Dorsolateral prefrontal cortex (tissue), 120 donors: ENCODE measurements at regions of chr11 and their contacts with region 1.

Region 1: GRCh38 chr11:125164422-125165110 is at the start of gene PKNOX2:
- DNase-seq: peak; percentile 52 to 90 (median 80)
- H3K4me3 ChIP-seq: peak within 1 kb of the TSS; percentile 54 to 87 (median 76)
- H3K27ac ChIP-seq: peak within 1 kb of the TSS; percentile 13 to 98 (median 93)
- H3K27me3 ChIP-seq: peaks cover 0 to 5% (median 0%) of the 10 kb centered on the region in 45 donors
- CTCF ChIP-seq: peak; percentile 19 to 80 (median 66)
- total RNA-seq, gene PKNOX2: 19.6 to 99.6 (median 55.2) TPM

Region 2: DNA sequence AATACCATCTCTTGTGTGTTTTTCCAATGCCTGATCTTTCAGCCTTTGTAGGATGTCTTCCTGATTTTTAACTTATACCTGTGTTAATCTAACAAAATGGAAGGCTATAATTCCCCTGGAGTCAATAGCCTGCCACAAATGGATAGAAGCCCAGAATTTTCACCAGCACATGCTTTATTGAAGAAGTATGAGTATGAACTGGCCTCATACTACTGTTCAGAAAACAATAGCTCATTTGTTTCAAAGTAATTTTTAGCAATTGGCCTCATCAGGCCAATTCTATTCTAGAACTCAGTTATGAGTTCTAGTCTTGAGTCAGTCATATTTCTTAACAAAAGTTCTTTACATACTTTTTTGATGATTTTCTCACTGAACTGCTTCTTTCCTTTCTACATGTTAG is 142.0 kb before region 1 on chr11:
- intact Hi-C with region 1: no loop called
- DNase-seq: no peak
- H3K4me3 ChIP-seq: no peak overlapping the region
- H3K27ac ChIP-seq: no peak overlapping the region
- H3K27me3 ChIP-seq: no peaks in the 10 kb centered on the region
- CTCF ChIP-seq: no peak

Region 3: DNA sequence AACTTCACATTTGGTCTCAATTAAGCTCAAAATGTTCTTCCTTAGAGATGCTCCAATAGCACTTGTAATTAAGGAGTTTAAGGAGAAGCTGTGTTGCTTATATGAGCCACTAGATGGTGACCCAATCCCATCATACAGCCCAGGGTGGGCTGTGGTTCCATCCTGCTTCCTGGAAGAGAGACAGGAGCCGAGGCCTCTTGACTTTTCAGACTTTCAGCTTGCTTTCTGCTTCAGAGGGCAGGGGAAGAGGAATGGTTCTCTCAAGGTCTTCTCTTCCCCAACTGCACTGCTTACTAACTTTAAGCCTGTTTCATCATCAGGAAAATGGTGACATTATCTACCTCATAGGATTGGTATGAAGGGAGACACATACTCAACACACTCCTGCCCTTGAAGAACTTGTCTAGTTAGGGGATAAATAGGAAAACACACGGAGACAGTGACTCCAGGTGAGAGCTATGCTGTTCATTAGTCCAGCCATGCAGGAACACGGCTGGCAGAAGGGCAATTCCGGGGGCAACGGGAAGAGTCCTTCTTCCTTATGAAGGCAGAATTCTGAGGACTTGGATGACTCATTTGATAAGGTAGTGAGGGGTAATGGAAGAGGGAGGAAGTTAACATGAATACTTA is 73.2 kb before region 1 on chr11:
- intact Hi-C with region 1: no loop called
- DNase-seq: peak in 3 of 10 donors; percentile 37 to 65 (median 50)
- H3K4me3 ChIP-seq: no peak overlapping the region
- H3K27ac ChIP-seq: peak overlapping the region in 6 of 59 donors; percentile 1 to 52 (median 17)
- H3K27me3 ChIP-seq: no peaks in the 10 kb centered on the region
- CTCF ChIP-seq: peak; percentile 48 to 86 (median 70)

Region 4: DNA sequence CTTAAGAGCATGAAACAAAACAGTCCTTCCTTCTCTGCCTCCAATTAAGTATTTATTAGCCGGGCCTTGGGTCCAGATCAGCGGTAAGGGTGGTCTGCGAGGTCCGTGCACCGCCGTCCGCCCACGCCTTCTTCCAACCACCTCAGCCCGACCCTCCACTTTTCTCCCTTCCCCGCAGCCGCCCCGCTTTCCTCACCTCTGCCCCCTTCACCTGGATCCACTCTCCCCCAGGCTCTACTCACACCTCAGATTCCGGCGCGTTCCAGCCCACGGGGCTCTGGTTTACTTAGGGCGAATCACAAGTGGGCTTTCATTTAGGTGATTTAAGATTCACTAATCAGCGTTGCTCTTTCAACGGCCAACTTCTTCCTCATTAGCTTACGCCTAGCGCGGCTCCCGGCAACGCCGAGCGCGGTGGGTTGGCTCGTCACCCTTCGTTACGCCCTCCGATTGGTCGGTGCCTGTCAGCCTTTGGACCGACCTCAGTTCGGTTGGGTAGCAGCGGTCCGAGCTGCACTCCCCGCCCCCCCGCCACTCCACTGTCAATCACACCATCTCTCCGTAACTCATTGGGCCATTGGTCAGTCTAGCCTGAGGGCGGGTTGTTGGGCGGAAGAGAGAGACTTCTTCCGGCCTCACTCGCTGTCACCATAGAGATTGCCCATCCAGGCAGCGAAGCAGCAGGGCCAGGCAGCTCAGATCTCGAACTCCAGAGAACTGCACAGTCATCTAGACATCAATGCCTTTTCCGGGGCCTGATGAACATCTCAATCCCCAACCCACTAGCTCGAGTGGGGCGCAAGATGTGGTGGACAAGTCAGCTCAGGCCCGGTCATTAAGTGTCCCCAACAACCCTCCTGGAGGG is 53.0 kb before region 1 on chr11 and contains the start of gene TMEM218:
- intact Hi-C with region 1: loop called in 1 of 2 experiments (anchors 5 kb)
- DNase-seq: peak; percentile 99 to 100 (median 100)
- H3K4me3 ChIP-seq: peak within 1 kb of the TSS; percentile 50 to 97 (median 86)
- H3K27ac ChIP-seq: peak within 1 kb of the TSS in 57 of 59 donors; percentile 43 to 92 (median 78)
- H3K27me3 ChIP-seq: no peaks in the 10 kb centered on the region
- CTCF ChIP-seq: peak in 14 of 56 donors; percentile 7 to 42 (median 24)
- total RNA-seq, gene TMEM218: 5.4 to 17.7 (median 9.7) TPM

Region 5: GRCh38 chr11:125329786-125330185 is 165.2 kb after region 1 on chr11:
- intact Hi-C with region 1: loop called in 1 of 2 experiments (anchors 5 kb)
- DNase-seq: peak in 1 of 10 donors; percentile 31
- H3K4me3 ChIP-seq: no peak overlapping the region
- H3K27ac ChIP-seq: peak overlapping the region in 56 of 59 donors; percentile 4 to 87 (median 70)
- H3K27me3 ChIP-seq: no peaks in the 10 kb centered on the region
- CTCF ChIP-seq: no peak

Region 6: DNA sequence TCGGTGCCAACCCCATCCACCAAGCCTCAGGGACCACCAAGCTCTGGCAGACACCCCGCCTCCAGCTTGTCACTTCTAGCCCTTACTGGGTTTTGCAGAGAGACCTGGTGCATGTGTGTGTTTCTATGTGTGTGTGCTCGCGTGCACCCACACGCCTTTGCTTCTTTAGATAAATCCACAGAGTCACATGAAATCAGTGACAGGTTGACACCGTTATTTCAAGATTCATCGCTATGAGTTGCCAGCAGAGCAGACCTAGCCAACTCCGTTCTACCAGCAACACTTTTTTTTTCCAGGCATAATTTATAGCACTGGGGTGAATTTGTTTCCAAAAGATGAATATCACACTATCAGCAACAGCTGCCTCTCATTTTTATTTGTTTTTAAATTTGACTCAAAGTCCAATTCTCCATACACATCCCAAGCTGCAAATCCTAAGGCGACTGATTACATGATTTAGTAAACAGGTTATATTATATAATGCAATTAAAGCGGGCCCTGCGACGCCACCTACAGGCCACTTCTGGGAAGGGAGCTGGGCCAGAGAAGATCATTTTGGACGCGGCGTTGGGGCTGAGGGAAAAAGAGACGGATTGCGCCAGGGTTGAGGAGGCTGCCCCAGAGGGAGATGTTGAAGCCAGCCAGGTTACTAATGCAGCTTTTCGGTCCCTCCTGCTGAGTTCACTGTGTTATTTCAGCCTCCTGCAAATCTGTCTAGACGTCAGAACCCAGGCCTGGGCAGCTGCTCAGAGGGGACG is 181.0 kb after region 1 on chr11:
- intact Hi-C with region 1: loop called (anchors 1 to 2 kb)
- DNase-seq: peak in 9 of 10 donors; percentile 65 to 88 (median 78)
- H3K4me3 ChIP-seq: peak overlapping the region in 1 of 59 donors; percentile 4
- H3K27ac ChIP-seq: peak overlapping the region in 57 of 59 donors; percentile 43 to 95 (median 84)
- H3K27me3 ChIP-seq: no peaks in the 10 kb centered on the region
- CTCF ChIP-seq: peak; percentile 82 to 97 (median 89)

Region 7: DNA sequence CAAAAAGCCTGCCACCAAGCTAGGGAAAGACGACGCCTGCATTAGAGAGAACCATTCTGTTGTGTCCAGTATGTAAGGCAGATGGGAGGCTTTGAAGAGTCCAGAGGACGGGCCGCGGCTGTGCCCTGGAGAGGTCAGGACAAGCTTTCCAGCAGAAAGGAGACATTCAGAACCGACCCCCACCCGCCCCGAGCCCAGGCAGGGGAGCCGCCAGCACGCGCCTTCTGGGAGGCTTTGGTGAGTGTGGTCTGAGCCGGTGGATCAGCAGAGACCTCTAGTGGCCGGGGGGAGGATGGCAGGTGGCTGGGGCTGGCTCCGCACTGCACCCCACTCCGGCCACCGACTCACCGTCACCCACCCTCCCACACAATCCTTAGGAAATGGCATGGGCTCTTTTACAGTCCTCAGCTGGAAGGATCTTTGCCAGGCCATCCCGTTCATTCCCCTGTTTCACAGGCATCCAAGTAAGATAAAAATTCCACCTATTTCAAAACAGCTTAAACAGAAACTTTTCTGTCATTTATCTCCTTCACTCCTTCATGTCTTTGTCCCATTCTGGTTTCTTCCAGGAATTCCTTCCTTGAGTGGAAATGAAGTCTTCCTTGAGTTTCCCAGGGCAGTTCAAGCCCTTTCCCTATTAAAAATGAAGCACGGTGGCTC is 240.3 kb after region 1 on chr11:
- intact Hi-C with region 1: loop called (anchors 2 to 5 kb)
- DNase-seq: peak; percentile 72 to 84 (median 77)
- H3K4me3 ChIP-seq: peak overlapping the region in 21 of 59 donors; percentile 5 to 35 (median 17)
- H3K27ac ChIP-seq: peak overlapping the region in 56 of 59 donors; percentile 12 to 87 (median 70)
- H3K27me3 ChIP-seq: no peaks in the 10 kb centered on the region
- CTCF ChIP-seq: peak; percentile 64 to 98 (median 91)

Region 8: GRCh38 chr11:125433454-125434121 is 269.0 kb after region 1 on chr11:
- intact Hi-C with region 1: loop called in 1 of 2 experiments (anchors 10 kb)
- DNase-seq: peak; percentile 58 to 86 (median 79)
- H3K4me3 ChIP-seq: peak overlapping the region in 8 of 59 donors; percentile 11 to 46 (median 20)
- H3K27ac ChIP-seq: peak overlapping the region in 57 of 59 donors; percentile 15 to 90 (median 73)
- H3K27me3 ChIP-seq: no peaks in the 10 kb centered on the region
- CTCF ChIP-seq: peak; percentile 12 to 78 (median 64)